ENCODE measurements at regions of chr16 and their contacts with region 1.

Region 1: GRCh38 chr16:2147981-2148671 is at the start of gene RAB26:
- DNase-seq: peak; percentile 89
- ATAC-seq: peak; percentile 88 to 90
- H3K4me3 ChIP-seq: peak within 1 kb of the TSS; percentile 56
- H3K27ac ChIP-seq: peak within 1 kb of the TSS; percentile 41
- H3K4me1 ChIP-seq: peaks cover 50% of the 10 kb centered on the region
- H3K27me3 ChIP-seq: no peaks in the 10 kb centered on the region
- CTCF ChIP-seq: no peak
- total RNA-seq, gene RAB26: 0.80 TPM

Region 2: DNA sequence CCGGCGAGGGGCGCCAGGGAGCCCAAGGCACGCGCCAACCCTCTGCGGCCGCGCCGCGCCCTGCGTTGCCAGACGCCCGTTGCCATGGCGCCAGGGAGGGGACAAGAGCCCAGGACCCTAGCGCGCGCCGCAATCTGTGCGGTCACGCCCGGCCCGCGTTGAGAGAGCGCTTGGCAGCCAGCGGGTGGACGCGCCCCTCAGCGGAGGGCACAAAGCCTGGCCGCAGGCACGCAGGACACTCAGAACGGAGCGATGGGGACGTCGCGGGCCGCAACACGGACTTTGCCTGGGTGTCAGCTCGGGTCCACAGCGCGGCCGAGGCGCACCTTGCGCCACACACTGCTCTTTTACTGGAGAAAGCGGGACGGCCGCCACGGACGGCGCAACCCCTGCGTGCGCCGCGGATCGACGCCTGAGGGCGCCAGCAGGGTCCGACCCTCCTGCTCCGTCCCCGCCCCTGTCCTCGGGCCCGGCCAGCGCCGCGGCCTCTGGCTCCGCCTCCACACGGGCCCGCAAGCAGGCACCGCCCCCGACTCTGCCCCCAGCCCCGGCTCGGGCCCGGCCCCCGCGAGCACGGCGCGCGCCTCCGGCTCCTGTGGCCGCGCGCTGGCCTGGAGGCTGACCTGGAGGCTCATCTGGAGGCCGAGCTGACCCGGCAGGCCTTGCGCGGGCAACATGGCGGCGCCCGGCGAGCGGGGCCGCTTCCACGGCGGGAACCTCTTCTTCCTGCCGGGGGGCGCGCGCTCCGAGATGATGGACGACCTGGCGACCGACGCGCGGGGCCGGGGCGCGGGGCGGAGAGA is 164.4 kb before region 1 on chr16 and contains the start of gene GFER:
- intact Hi-C with region 1: no loop called
- DNase-seq: peak; percentile 93
- ATAC-seq: peak; percentile 91 to 94
- H3K4me3 ChIP-seq: peak within 1 kb of the TSS; percentile 91
- H3K27ac ChIP-seq: peak within 1 kb of the TSS; percentile 82
- H3K4me1 ChIP-seq: peaks cover 27% of the 10 kb centered on the region
- H3K27me3 ChIP-seq: peaks cover 34% of the 10 kb centered on the region
- CTCF ChIP-seq: peak; percentile 58
- total RNA-seq, gene GFER: 24.7 TPM

Region 3: DNA sequence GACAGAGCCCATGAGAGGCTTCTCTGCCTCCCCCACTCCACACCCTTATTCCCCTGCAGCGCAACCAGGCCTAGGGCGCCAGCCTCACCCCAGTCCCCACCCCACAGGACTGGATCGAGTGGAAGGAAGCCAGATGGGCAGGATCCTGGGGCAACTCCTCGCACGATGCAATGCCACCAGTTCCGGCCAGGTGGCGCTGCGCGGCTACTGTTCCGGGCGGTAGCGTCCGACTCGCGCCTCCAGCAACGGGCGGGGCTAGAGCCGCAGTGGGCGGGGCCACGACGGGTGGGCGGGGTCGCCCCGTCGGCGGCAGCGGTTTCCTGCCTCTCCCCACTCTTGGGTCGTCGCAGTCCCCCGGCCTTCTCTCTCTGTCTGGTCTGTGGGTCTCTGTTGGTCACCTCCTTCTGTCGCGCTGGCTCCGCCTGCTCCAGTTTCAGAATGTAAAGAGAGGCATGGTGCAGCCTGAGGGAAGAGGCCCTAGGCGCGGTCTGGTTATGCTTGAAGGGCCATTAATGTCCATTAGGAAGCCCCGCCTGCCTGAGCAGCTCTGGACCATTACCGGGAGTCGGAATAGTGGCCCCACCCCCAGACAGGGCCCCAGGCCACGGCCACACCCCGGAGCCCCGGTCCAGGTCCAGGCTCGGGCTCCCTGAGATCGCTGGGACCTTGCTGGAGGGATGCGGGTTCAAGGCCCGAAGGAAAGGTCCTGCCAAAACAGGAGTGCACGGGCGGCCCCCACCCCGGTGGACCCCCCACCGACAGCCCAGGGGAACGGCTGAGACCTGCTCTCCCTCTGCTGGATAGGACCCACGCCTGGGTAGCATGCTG is 124.8 kb before region 1 on chr16:
- intact Hi-C with region 1: loop called (anchors 10 kb)
- DNase-seq: peak; percentile 95
- ATAC-seq: peak; percentile 94 to 96
- H3K4me3 ChIP-seq: peak overlapping the region; percentile 53
- H3K27ac ChIP-seq: peak overlapping the region; percentile 85
- H3K4me1 ChIP-seq: peaks cover 60% of the 10 kb centered on the region
- H3K27me3 ChIP-seq: peaks cover 42% of the 10 kb centered on the region
- CTCF ChIP-seq: peak; percentile 98

Region 4: DNA sequence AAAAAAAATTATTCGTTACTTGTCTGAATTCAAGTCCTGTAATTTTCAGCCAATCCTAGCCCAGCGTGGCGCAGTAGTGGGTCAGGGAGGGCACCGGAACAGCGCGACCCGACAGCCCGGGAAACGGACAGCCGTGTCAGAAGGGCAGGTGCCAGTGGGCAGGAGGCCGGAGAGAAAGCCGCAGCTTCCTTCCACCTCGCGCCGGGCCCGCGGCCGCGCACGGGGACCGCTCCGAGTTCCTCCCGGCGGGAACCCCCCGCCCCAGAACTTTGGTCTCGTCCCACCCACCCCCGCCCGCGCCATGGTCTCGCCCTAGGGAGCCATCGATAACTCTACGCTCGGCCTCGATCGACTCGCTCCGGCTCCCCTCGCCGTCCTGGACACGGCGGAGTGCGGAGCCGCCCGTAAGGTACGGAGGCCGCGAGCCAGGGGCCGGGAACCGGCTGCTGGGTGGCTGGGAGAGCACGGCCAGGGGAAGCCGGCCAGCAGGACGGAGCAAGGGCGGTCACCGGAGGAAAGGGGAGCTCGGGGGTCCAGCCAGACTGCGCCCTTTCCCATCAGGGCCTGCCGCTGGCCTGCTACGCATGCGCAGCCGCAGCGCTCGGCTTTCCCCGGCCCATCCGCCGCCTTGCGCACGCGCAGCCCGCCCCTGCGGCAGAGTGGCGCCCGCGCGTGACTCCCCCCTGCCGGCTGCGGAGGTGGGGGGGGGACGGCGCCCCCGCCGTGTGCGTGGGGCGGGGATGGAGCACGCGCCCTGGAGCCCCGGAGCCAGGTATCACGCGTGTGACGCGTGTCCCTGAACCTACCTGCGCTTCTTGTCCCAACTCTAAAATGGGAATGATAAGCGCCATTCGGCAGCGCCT is 57.2 kb after region 1 on chr16 and contains the start of gene MLST8:
- intact Hi-C with region 1: no loop called
- DNase-seq: peak; percentile 91
- ATAC-seq: peak; percentile 92 to 97
- H3K4me3 ChIP-seq: peak within 1 kb of the TSS; percentile 86
- H3K27ac ChIP-seq: peak within 1 kb of the TSS; percentile 99
- H3K4me1 ChIP-seq: peaks cover 23% of the 10 kb centered on the region
- H3K27me3 ChIP-seq: no peaks in the 10 kb centered on the region
- CTCF ChIP-seq: peak; percentile 38
- total RNA-seq, gene MLST8: 26.6 TPM

Measured in lower lobe of right lung (tissue), 2 donors.